ENCODE measurements at regions of chr5 and their contacts with region 1.

Region 1: GRCh38 chr5:173057062-173057924 is 1.1 kb downstream of the CREBRF start:
- DNase-seq: peak; percentile 99
- H3K4me3 Mint-ChIP-seq: peak overlapping the region; percentile 94
- H3K27ac Mint-ChIP-seq: peak overlapping the region; percentile 96
- H3K4me1 Mint-ChIP-seq: peaks cover 19% of the 10 kb centered on the region
- H3K27me3 Mint-ChIP-seq: no peaks in the 10 kb centered on the region

Region 2: DNA sequence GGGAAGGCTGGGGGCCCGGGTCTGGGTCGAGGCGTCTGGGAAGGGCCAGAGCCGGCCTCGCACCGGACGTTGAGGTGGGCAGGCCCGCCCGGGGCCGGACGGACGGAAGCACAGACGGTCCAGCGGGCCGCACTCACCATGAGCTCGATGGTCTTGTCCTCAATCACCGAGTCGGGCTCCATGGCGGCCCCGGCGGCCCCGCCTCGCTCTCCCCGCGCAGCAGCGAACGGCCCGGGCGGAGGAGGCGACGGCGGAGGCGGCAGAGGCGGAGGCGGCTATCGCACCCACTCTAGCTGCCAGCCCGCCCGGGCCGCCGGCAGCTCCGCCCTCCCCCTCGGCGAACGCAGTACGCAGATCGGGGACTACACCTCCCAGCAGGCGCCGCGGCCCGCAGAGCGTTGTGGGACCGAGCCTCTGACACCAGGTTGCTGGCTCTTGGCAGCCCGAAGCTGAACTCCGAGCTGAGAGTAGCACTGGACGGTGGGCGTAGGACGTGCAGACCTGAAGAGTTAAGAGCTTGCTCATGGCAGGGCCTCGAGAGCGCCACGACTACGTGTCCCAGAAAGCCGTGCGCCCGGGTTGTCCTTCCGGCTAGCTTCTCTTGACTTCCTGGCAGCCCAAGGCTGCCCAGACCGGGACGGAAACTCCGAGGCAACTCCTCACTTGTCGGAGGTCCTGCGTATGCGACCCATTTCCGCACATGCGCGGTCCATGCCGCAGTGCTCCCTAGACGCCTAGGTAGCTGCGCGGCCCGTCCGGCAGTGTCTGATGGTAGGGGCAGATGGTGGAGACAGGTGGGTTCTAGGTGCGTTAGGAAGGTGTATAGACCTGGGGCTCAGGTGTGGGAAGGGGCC is 1050.7 kb before region 1 on chr5 and contains the start of gene FBXW11:
- intact Hi-C with region 1: loop called (anchors 5 kb)
- DNase-seq: peak; percentile 92
- H3K4me3 Mint-ChIP-seq: peak within 1 kb of the TSS; percentile 94
- H3K27ac Mint-ChIP-seq: peak within 1 kb of the TSS; percentile 96
- H3K4me1 Mint-ChIP-seq: peaks cover 56% of the 10 kb centered on the region
- H3K27me3 Mint-ChIP-seq: no peaks in the 10 kb centered on the region
- total RNA-seq, gene FBXW11: 47.3 and 51.4 TPM in 2 replicates

Region 3: GRCh38 chr5:172283020-172283861 is 774.1 kb before region 1 on chr5 and contains the start of gene UBTD2:
- intact Hi-C with region 1: loop called (anchors 2 kb)
- DNase-seq: peak; percentile 79
- H3K4me3 Mint-ChIP-seq: peak within 1 kb of the TSS; percentile 89
- H3K27ac Mint-ChIP-seq: peak within 1 kb of the TSS; percentile 75
- H3K4me1 Mint-ChIP-seq: peaks cover 24% of the 10 kb centered on the region
- H3K27me3 Mint-ChIP-seq: peaks cover 25% of the 10 kb centered on the region
- total RNA-seq, gene UBTD2: 6.6 TPM in 2 replicates

Region 4: GRCh38 chr5:172958331-172959046 is 98.8 kb before region 1 on chr5:
- intact Hi-C with region 1: loop called (anchors 1 kb)
- DNase-seq: peak; percentile 54
- H3K4me3 Mint-ChIP-seq: peak overlapping the region; percentile 92
- H3K27ac Mint-ChIP-seq: peak overlapping the region; percentile 95
- H3K4me1 Mint-ChIP-seq: peaks cover 13% of the 10 kb centered on the region
- H3K27me3 Mint-ChIP-seq: peaks cover 2% of the 10 kb centered on the region

Region 5: GRCh38 chr5:173144200-173145176 is 87.2 kb after region 1 on chr5 and contains the start of gene BNIP1:
- intact Hi-C with region 1: loop called (anchors 1 kb)
- DNase-seq: peak; percentile 91
- H3K4me3 Mint-ChIP-seq: peak within 1 kb of the TSS; percentile 95
- H3K27ac Mint-ChIP-seq: peak within 1 kb of the TSS; percentile 98
- H3K4me1 Mint-ChIP-seq: peaks cover 5% of the 10 kb centered on the region
- H3K27me3 Mint-ChIP-seq: no peaks in the 10 kb centered on the region
- total RNA-seq, gene BNIP1: 22.6 and 23.2 TPM in 2 replicates

Region 6: DNA sequence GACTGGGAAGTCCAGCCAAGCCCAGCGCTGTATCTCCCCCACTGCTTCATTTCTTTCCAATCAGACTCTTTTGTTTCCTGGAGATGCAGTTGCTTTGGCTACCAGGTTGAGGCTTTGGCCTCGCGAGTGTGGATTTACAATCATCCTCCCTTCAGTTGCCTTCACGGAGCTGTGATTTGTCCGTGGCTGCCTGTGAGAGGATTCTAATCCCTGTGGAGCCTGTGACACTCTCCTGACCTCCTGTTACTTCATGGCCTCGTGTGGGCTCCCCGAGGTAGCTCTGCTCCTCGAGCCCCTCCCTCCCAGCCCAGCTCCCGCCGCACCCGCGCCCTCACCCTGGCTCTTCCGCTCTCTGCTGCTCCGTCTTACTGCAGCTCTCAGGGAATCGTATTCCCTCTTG is 378.2 kb after region 1 on chr5:
- intact Hi-C with region 1: no loop called
- DNase-seq: no peak
- H3K4me3 Mint-ChIP-seq: no peak overlapping the region
- H3K27ac Mint-ChIP-seq: no peak overlapping the region
- H3K4me1 Mint-ChIP-seq: no peaks in the 10 kb centered on the region
- H3K27me3 Mint-ChIP-seq: no peaks in the 10 kb centered on the region

Region 7: DNA sequence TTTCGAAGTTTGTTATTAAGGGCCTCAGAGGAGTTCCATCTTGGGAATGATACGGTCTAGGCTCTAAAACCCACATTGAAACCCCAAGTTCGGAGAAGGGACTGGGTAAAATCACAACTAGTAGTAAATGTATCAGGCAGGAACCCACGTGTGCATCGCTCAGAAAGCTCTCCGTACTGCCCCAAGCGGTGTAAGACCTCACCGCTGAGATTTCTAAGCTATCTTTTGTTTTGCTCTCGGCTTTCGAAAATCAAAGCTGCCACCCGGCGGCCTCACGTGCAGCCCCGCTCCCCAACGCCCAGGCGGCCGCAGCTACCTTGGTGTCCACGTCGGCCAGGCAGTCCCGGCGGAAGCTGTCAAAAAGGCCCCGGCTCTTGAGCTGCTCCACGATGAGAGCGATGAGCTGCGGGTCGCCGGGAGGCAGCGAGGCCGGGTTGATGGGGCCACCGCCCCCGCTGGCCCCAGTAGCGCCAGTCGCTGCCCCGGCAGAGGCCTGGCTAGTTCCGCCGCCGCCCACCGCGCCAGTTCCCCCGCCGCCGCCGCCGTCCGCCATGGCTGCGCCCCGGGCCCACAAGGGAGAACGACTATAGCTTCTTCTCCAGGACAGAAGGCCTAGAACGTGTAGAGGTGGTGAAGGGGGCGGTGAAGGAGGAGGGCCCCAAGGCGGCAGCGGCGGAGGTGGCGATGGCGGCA is 558.7 kb after region 1 on chr5:
- intact Hi-C with region 1: loop called (anchors 2 kb)
- DNase-seq: peak; percentile 61
- H3K4me3 Mint-ChIP-seq: peak overlapping the region; percentile 90
- H3K27ac Mint-ChIP-seq: peak overlapping the region; percentile 88
- H3K4me1 Mint-ChIP-seq: peaks cover 31% of the 10 kb centered on the region
- H3K27me3 Mint-ChIP-seq: no peaks in the 10 kb centered on the region